HEK293 (cell line): ENCODE measurements at regions of chrX and their contacts with region 1.

Region 1: DNA sequence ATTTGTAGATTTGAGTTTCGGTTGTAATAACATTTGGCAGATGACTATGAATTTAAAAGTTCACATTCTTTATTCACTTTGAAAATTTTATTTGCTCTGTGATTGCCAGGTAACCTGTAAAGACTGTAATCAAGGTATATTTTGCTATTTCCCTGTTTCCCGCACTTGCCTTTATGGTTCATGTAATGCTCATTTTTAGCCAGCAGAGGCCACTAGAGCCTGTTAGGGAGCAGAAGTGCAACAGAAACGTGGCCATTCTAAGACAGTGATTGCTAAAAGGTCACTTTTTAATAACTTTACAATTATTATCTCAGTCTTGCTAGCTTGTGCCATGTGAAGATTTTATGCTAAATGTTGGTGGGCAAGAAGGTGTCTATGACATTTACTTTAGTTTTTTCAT is 12.4 kb downstream of the YIPF6 start:
- H3K4me3 ChIP-seq: no peak overlapping the region
- H3K27ac ChIP-seq: no peak overlapping the region
- H3K4me1 ChIP-seq: no peaks in the 10 kb centered on the region
- CTCF ChIP-seq: peak; percentile 56

Region 2: GRCh38 chrX:68710870-68711576 is 199.8 kb after region 1 on chrX:
- CTCF ChIA-PET with region 1: interaction called, 27 read pairs
- POLR2A ChIA-PET with region 1: no interaction called
- H3K4me3 ChIP-seq: no peak overlapping the region
- H3K27ac ChIP-seq: no peak overlapping the region
- H3K4me1 ChIP-seq: no peaks in the 10 kb centered on the region
- CTCF ChIP-seq: peak; percentile 53

Region 3: GRCh38 chrX:68807818-68808217 is 296.6 kb after region 1 on chrX:
- CTCF ChIA-PET with region 1: interaction called, 12 read pairs
- POLR2A ChIA-PET with region 1: no interaction called
- H3K4me3 ChIP-seq: no peak overlapping the region
- H3K27ac ChIP-seq: no peak overlapping the region
- H3K4me1 ChIP-seq: no peaks in the 10 kb centered on the region
- CTCF ChIP-seq: no peak

Region 4: GRCh38 chrX:69093960-69094871 is 583.0 kb after region 1 on chrX:
- CTCF ChIA-PET with region 1: no interaction called
- POLR2A ChIA-PET with region 1: no interaction called
- H3K4me3 ChIP-seq: no peak overlapping the region
- H3K27ac ChIP-seq: no peak overlapping the region
- H3K4me1 ChIP-seq: no peaks in the 10 kb centered on the region
- CTCF ChIP-seq: peak; percentile 60; the same call in 1 of the 2 replicates

Region 5: GRCh38 chrX:69165087-69165651 is 653.9 kb after region 1 on chrX and contains the start of gene PJA1:
- CTCF ChIA-PET with region 1: no interaction called
- POLR2A ChIA-PET with region 1: no interaction called
- H3K4me3 ChIP-seq: peak within 1 kb of the TSS; percentile 66
- H3K27ac ChIP-seq: peak within 1 kb of the TSS; percentile 62; the same call in 1 of the 2 replicates
- H3K4me1 ChIP-seq: no peaks in the 10 kb centered on the region
- CTCF ChIP-seq: no peak